Posterior cingulate gyrus (tissue), 11 donors: ENCODE measurements at regions of chr10 and their contacts with region 1.

Region 1: GRCh38 chr10:71608819-71609768 is 110.5 kb downstream of the C10orf105 start:
- DNase-seq: peak; percentile 59 to 97 (median 90)

Region 2: GRCh38 chr10:71314028-71314693 is 294.9 kb before region 1 on chr10:
- intact Hi-C with region 1: loop called (anchors 5 kb)
- DNase-seq: peak in 8 of 10 donors; percentile 40 to 90 (median 61)

Region 3: DNA sequence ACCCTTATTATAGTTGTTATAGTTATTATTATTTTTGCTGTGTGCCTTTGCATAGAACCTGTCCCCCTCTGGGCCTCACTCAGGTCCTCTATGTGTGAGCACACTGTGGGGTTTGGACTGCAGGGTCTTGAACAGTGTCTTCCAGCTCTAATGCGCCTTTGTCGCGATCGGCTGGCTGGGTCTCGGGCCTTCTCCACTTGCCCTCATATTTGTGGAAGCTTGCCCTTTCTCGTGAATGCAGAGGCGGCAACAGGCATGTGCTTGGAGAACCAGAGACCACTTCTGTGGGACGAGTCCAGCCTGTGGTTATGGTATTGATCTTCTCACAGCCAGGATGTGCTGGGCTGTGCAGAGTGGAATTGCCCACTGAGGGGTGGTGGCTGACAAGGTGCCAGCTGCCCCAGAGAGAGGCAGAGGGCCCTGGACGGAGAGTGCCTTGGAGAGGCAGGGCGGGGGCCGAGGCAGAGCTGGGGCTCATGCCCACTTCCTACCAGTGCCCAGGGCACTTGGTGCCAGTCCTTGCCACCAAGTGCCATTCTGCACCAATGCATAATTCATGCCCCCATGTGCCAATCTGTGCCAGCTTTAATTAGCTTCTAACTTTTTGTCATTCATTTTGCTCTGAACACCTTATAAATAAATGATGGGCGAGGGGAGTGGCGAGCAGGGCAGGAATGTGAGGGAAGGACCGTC is 219.2 kb before region 1 on chr10:
- intact Hi-C with region 1: loop called (anchors 5 kb)
- DNase-seq: peak in 3 of 10 donors; percentile 23 to 78 (median 28)

Region 4: DNA sequence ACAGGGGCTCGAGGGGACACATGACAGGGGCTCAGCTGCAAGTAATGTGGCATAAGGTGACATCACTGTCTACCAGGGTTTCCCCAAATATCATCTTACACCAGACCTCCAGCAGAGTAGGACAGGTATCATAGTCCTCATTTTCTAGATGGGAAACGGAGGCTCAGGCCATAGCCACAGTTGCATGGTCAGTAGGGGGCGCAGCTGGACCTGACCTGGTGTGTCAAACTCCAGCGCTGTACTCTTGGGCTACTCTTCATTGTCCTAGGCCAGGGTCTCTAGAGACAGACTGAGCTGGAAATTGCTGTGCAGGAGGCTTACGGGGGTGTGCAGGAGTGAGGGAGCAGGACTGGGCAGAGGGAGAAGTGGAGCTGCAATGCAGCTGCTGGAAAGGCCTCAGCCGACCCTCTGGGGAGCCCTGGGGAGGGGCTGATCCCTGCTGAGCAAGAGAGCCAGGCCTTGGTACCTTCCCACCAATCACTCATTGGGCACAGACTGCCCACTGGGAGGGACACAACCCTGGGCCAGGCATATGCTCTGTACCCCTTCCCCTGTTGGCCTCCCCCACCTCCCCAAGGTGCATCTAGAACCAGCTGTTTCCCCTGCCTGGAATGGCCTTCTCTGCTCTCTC is 122.5 kb before region 1 on chr10:
- intact Hi-C with region 1: loop called (anchors 5 kb)
- DNase-seq: peak in 5 of 10 donors; percentile 35 to 83 (median 54)

Region 5: GRCh38 chr10:71569775-71570588 is 39.1 kb before region 1 on chr10:
- intact Hi-C with region 1: loop called (anchors 10 kb)
- DNase-seq: peak in 8 of 10 donors; percentile 57 to 94 (median 85)

Region 6: GRCh38 chr10:72419241-72419640 is 810.1 kb after region 1 on chr10:
- intact Hi-C with region 1: no loop called
- DNase-seq: no peak